Ascending aorta (tissue), 2 donors: ENCODE measurements at regions of chr18 and their contacts with region 1.

Region 1: GRCh38 chr18:35972197-35973052 is at the start of gene RMP24:
- DNase-seq: peak; percentile 54 to 95
- H3K4me3 ChIP-seq: peak within 1 kb of the TSS; percentile 85 to 96
- H3K27ac ChIP-seq: peak within 1 kb of the TSS; percentile 89
- H3K4me1 ChIP-seq: peaks cover 4 to 19% of the 10 kb centered on the region in 2 donors
- H3K27me3 ChIP-seq: no peaks in the 10 kb centered on the region
- CTCF ChIP-seq: no peak

Region 2: GRCh38 chr18:35290073-35290735 is 682.2 kb before region 1 on chr18 and contains the start of gene ZSCAN30:
- intact Hi-C with region 1: loop called (anchors 2 kb)
- DNase-seq: peak; percentile 79 to 97
- H3K4me3 ChIP-seq: peak within 1 kb of the TSS; percentile 73 to 86
- H3K27ac ChIP-seq: peak within 1 kb of the TSS; percentile 82 to 86
- H3K4me1 ChIP-seq: peaks cover 3 to 11% of the 10 kb centered on the region in 2 donors
- H3K27me3 ChIP-seq: no peaks in the 10 kb centered on the region
- CTCF ChIP-seq: no peak
- total RNA-seq, gene ZSCAN30: 7.5 TPM

Region 3: DNA sequence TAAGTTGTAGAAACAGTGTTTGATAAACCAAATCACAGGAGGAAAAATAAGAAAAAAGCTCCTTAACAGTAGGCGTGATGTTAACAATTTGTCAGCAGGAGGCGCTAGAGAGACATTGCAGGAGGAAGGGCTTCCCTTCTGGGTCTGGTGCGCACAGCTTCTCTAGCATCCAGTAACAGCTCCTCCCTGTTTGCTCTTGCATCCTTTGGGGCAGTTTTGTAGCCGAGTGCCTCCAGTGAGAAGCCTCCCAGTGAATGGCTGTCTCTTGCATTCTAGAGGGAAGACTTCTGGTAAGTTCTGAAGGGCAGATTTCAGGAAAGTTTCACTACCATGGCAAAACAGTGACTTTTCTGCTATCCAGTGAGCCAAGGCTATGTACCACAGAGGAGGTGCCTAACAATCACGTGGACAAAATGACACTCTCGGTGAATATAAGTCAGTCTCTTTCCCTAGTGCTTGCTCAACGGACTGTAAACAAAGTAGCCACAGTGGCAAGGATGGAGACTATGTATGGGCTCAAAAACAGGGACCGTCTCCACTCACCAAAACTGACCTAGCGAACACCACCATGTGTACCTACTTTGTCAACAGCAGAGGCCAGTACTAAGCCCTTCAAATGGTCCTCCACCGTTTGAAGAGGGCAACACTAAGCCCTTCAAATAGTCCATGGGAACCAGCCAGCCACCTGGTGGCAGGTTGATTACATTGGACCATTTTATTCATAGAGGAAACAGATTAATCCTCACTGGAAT is 585.6 kb before region 1 on chr18:
- intact Hi-C with region 1: loop called (anchors 5 kb)
- DNase-seq: peak in 1 of 2 donors; percentile 82
- H3K4me3 ChIP-seq: no peak overlapping the region
- H3K27ac ChIP-seq: no peak overlapping the region
- H3K4me1 ChIP-seq: no peaks in the 10 kb centered on the region
- H3K27me3 ChIP-seq: no peaks in the 10 kb centered on the region
- CTCF ChIP-seq: peak; percentile 52 to 85 (median 78)

Region 4: GRCh38 chr18:35868915-35869314 is 103.5 kb before region 1 on chr18:
- intact Hi-C with region 1: no loop called
- DNase-seq: no peak
- H3K4me3 ChIP-seq: no peak overlapping the region
- H3K27ac ChIP-seq: no peak overlapping the region
- H3K4me1 ChIP-seq: no peaks in the 10 kb centered on the region
- H3K27me3 ChIP-seq: no peaks in the 10 kb centered on the region
- CTCF ChIP-seq: no peak

Region 5: GRCh38 chr18:36067055-36067957 is 94.9 kb after region 1 on chr18 and contains the start of gene RPRD1A:
- intact Hi-C with region 1: loop called (anchors 1 kb)
- DNase-seq: peak; percentile 83 to 98
- H3K4me3 ChIP-seq: peak within 1 kb of the TSS; percentile 79 to 98
- H3K27ac ChIP-seq: peak within 1 kb of the TSS; percentile 88 to 92
- H3K4me1 ChIP-seq: peaks cover 6 to 10% of the 10 kb centered on the region in 2 donors
- H3K27me3 ChIP-seq: no peaks in the 10 kb centered on the region
- CTCF ChIP-seq: no peak
- total RNA-seq, gene RPRD1A: 16.4 TPM

Region 6: DNA sequence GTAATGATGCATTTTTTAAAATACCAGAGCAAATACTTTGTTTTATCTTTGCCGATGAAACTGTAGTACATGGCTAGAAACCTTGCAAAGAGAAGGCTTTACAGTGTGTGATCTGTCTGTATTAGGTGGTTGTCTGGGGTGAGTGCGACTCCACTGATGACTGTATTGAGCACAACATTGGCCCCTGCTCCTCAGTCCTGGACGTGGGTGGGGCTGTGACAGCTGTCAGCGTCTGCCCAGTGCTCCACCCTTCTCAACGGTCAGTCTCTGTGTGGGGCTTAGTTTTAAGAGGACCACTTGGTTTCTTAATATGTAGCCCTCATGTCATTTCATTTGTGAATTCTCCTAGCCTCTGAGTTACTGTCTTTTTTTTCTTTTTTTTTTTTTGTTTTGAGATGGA is 197.5 kb after region 1 on chr18:
- intact Hi-C with region 1: no loop called
- DNase-seq: no peak
- H3K4me3 ChIP-seq: no peak overlapping the region
- H3K27ac ChIP-seq: no peak overlapping the region
- H3K4me1 ChIP-seq: no peaks in the 10 kb centered on the region
- H3K27me3 ChIP-seq: no peaks in the 10 kb centered on the region
- CTCF ChIP-seq: no peak